ENCODE measurements at regions of chr16 and their contacts with region 1.

Region 1: DNA sequence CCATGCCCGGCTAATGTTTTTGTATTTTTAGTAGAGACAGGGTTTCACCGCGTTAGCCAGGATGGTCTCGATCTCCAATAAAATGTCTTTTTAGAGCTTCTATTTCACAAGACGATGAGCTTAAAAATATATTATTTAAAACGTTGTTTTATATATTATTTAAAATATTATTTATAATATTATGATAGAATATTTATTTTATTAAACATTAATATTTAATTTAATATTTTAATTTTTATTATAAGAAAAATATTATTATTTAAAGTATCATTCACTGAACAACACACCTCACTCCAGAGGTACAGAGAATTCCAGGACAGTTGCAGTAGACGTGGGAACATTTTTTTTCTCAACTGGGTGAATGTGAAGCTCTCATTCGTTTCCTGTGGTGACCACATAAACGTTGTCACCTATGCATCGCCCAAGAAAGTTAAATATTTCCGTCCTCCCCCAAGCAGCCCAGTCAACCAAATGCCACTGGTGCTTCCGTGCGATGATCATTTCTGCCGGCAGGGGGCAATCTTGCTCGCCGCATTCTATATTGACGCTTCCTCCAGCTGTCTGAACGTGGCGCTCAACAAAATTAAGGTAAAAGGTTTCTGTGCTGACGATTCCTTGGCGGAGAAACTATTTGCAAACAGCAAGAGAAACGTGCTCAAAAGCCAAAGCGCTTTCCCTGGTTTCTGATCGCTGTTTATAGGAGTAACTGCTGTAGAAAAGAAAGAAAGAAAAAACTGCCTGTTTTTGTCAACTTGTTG is 41.7 kb upstream of the PRSS54 start:
- DNase-seq: peak; percentile 95
- ATAC-seq: peak; percentile 98
- H3K4me3 Mint-ChIP-seq: peak overlapping the region; percentile 40
- H3K27ac Mint-ChIP-seq: no peak overlapping the region
- H3K4me1 Mint-ChIP-seq: peaks cover 6% of the 10 kb centered on the region
- H3K27me3 Mint-ChIP-seq: peaks cover 3% of the 10 kb centered on the region
- CTCF ChIP-seq: peak; percentile 82

Region 2: GRCh38 chr16:58306327-58306726 is 30.2 kb before region 1 on chr16:
- CTCF ChIA-PET with region 1: interaction called, 10 read pairs
- POLR2A ChIA-PET with region 1: no interaction called
- intact Hi-C with region 1: no loop called
- DNase-seq: peak; percentile 81
- ATAC-seq: no peak
- H3K4me3 Mint-ChIP-seq: no peak overlapping the region
- H3K27ac Mint-ChIP-seq: no peak overlapping the region
- H3K4me1 Mint-ChIP-seq: no peaks in the 10 kb centered on the region
- H3K27me3 Mint-ChIP-seq: peaks cover 10% of the 10 kb centered on the region
- CTCF ChIP-seq: peak; percentile 71

Region 3: DNA sequence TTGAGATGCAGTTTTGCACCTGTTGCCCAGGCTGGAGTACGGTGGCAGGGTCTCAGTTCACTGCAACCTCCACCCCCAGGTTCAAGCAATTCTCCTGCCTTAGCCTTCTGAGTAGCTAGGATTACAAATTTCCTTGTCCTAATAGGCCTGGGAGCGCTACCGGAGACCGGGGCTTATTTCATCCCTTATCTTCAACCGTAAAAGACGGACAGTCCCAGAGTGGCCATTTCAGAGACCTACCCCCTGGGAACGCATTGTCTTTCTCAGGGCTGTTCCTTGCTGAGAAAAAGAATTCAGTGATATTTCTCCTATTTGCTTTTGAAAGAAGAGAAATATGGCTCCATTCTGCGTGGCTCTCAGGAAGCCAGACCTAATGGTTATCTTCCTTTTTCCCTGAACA is 16.2 kb after region 1 on chr16:
- CTCF ChIA-PET with region 1: interaction called, 27 read pairs
- POLR2A ChIA-PET with region 1: interaction called, 3 read pairs
- intact Hi-C with region 1: no loop called
- DNase-seq: no peak
- ATAC-seq: no peak
- H3K4me3 Mint-ChIP-seq: no peak overlapping the region
- H3K27ac Mint-ChIP-seq: no peak overlapping the region
- H3K4me1 Mint-ChIP-seq: no peaks in the 10 kb centered on the region
- H3K27me3 Mint-ChIP-seq: peaks cover 16% of the 10 kb centered on the region
- CTCF ChIP-seq: no peak

Region 4: DNA sequence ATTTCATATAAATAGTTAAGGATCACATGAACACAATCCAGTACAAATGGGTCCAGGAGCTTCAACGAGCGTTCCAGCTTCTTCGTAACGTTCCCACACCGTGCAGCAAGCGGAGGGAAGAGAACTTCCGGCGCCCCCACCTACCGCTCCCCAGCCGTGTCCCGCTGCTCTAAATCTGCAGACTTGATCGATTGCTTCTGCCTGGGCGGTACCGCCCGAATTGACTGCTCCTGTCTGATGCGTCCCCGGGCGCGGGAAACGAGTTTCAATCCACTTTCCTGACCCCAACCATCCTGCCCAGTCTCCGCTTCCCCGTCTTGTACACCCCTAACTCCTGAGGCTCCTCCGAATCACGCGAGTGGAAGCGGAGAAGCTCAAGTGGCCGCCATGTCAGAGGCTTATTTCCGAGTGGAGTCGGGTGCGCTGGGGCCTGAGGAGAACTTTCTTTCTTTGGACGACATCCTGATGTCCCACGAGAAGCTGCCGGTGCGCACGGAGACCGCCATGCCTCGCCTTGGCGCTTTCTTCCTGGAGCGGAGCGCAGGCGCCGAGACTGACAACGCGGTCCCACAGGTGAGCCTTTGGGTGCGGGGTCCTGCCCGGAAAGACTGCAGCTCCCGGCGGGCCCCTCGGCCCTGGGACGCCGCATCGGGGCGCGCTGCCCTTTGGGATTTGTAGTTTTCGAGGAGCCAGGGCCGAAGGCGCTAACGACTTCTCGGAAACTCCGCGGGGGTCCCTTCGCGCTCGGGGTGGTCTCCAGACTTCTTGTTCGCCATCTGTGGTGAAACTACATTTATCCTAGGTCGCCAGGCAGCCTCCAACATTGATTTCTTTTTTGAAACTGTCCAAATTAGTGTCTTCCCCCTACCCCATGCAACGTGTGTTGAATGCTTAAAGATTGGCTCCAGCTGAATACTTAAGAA is 56.0 kb after region 1 on chr16 and contains the start of gene GINS3:
- CTCF ChIA-PET with region 1: interaction called, 12 read pairs
- POLR2A ChIA-PET with region 1: interaction called, 3 read pairs
- intact Hi-C with region 1: loop called (anchors 2 kb)
- DNase-seq: peak; percentile 93
- ATAC-seq: peak; percentile 97
- H3K4me3 Mint-ChIP-seq: peak within 1 kb of the TSS; percentile 93
- H3K27ac Mint-ChIP-seq: peak within 1 kb of the TSS; percentile 96
- H3K4me1 Mint-ChIP-seq: peaks cover 19% of the 10 kb centered on the region
- H3K27me3 Mint-ChIP-seq: no peaks in the 10 kb centered on the region
- CTCF ChIP-seq: no peak
- total RNA-seq, gene GINS3: 16.0 to 18.1 TPM

Region 5: GRCh38 chr16:58451945-58452401 is 115.5 kb after region 1 on chr16:
- CTCF ChIA-PET with region 1: interaction called, 11 read pairs
- POLR2A ChIA-PET with region 1: no interaction called
- intact Hi-C with region 1: no loop called
- DNase-seq: no peak
- ATAC-seq: no peak
- H3K4me3 Mint-ChIP-seq: no peak overlapping the region
- H3K27ac Mint-ChIP-seq: no peak overlapping the region
- H3K4me1 Mint-ChIP-seq: no peaks in the 10 kb centered on the region
- H3K27me3 Mint-ChIP-seq: peaks cover 10% of the 10 kb centered on the region
- CTCF ChIP-seq: no peak

Region 6: GRCh38 chr16:58487566-58488351 is 151.2 kb after region 1 on chr16:
- CTCF ChIA-PET with region 1: interaction called, 201 read pairs
- POLR2A ChIA-PET with region 1: interaction called, 6 read pairs
- intact Hi-C with region 1: loop called (anchors 1 kb)
- DNase-seq: peak; percentile 84
- ATAC-seq: peak; percentile 93
- H3K4me3 Mint-ChIP-seq: no peak overlapping the region
- H3K27ac Mint-ChIP-seq: no peak overlapping the region
- H3K4me1 Mint-ChIP-seq: no peaks in the 10 kb centered on the region
- H3K27me3 Mint-ChIP-seq: peaks cover 2% of the 10 kb centered on the region
- CTCF ChIP-seq: peak; percentile 93

Region 7: DNA sequence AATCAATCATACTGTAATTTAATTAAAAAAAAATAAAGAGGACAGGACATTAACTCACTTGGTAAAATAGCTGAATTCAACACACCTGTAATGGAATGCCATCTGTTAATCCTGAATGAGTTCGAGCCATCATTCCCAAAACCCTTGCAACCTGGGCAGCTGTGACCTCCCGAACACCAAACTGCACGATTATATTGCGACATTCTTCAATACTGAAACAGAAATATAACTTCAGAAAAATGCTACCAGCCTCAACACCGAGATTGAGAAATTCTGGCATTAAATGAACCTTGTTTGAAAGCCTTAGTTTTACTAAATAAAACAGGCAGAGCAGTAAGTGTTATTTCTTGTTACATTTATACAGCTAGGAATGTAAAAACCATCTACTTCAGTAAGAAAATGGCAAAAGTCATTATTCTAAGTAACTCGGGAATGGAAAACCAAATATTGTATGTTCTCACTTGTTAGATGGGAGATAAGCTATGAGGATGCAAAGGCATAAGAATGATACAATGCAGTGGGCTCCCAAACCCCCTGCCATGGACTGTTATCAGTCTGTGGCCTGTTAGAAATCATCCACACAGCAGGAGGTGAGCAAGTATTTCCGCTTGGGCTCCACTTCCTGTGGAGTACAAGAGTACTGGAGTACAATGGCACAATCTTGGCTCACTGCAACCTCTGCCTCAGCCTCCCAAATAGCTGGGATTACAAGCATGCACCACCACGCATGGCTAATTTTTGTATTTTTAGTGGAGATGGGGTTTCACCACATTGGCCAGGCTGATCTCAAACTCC is 246.7 kb after region 1 on chr16:
- CTCF ChIA-PET with region 1: no interaction called
- POLR2A ChIA-PET with region 1: no interaction called
- intact Hi-C with region 1: no loop called
- DNase-seq: peak; percentile 32
- ATAC-seq: no peak
- H3K4me3 Mint-ChIP-seq: no peak overlapping the region
- H3K27ac Mint-ChIP-seq: peak overlapping the region; percentile 38
- H3K4me1 Mint-ChIP-seq: peaks cover 21% of the 10 kb centered on the region
- H3K27me3 Mint-ChIP-seq: no peaks in the 10 kb centered on the region
- CTCF ChIP-seq: no peak

Measured in activated CD8-positive, alpha-beta T cell treated with anti-CD3 and anti-CD28 coated beads for 36 hours (primary cell).